ENCODE measurements at regions of chr12 and their contacts with region 1.

Region 1: GRCh38 chr12:47032644-47033043 is 46.8 kb upstream of the PCED1B start:
- DNase-seq: no peak
- H3K4me3 ChIP-seq: no peak overlapping the region
- H3K27ac ChIP-seq: no peak overlapping the region
- H3K4me1 ChIP-seq: peaks cover 0 to 7% (median 0%) of the 10 kb centered on the region in 4 donors
- H3K27me3 ChIP-seq: no peaks in the 10 kb centered on the region
- CTCF ChIP-seq: peak; percentile 45 to 54 (median 54)
- EP300 ChIP-seq: no peak
- POLR2A ChIP-seq: no peak

Region 2: DNA sequence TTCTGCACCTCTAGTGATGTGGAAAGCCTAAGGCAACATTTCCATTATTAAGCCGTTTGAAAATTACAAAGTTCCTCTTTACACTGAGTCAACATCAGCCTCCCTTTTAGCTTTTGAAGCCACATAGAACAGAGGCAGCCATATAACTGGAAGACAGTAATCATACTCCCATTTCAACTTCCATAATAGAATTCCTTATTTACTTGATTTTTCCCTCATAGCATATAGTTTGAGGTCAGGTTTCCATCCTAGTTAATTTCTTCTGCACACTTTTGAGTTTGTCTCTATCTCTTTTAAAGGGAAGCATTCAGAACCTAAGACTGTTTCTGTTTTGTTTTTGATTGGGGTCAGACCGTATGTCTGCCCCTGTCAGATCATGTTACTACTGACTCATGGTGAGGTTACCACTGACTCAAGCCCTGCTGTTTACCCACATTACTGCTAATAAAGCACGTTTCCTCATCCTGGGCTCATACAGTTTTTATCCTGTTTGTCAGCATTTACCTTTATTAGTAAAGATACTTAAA is 367.8 kb before region 1 on chr12:
- intact Hi-C with region 1: no loop called
- DNase-seq: no peak
- H3K4me3 ChIP-seq: no peak overlapping the region
- H3K27ac ChIP-seq: no peak overlapping the region
- H3K4me1 ChIP-seq: peaks cover 17 to 20% (median 18%) of the 10 kb centered on the region in 4 donors
- H3K27me3 ChIP-seq: no peaks in the 10 kb centered on the region
- CTCF ChIP-seq: no peak
- EP300 ChIP-seq: no peak
- POLR2A ChIP-seq: no peak

Region 3: DNA sequence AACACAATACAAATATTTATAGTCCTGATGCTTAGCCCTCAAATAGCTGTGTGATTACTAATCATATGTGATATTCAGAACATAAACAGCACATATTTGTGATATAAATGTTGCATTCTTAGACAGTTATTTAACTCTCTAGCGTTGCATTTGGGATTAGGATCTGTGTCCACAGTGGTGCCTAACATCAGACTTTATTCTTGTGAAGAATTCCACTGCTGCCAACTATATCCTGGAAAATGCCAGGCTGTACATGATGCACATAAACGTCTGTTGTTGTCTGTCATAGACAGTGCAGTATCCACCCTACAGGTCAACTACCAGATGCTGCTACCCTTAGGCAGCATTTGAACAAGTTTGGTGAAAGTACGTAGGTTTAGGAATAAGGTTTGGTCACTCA is 245.9 kb before region 1 on chr12:
- intact Hi-C with region 1: no loop called
- DNase-seq: no peak
- H3K4me3 ChIP-seq: no peak overlapping the region
- H3K27ac ChIP-seq: no peak overlapping the region
- H3K4me1 ChIP-seq: peaks cover 0 to 4% (median 0%) of the 10 kb centered on the region in 4 donors
- H3K27me3 ChIP-seq: no peaks in the 10 kb centered on the region
- CTCF ChIP-seq: no peak
- EP300 ChIP-seq: no peak
- POLR2A ChIP-seq: no peak

Region 4: GRCh38 chr12:46963977-46964971 is 68.4 kb before region 1 on chr12:
- intact Hi-C with region 1: no loop called
- DNase-seq: no peak
- H3K4me3 ChIP-seq: peak overlapping the region in 2 of 4 donors; percentile 12 to 19
- H3K27ac ChIP-seq: peak overlapping the region; percentile 50 to 66 (median 55)
- H3K4me1 ChIP-seq: peaks cover 22 to 32% (median 28%) of the 10 kb centered on the region in 4 donors
- H3K27me3 ChIP-seq: no peaks in the 10 kb centered on the region
- CTCF ChIP-seq: no peak
- EP300 ChIP-seq: no peak
- POLR2A ChIP-seq: no peak

Region 5: DNA sequence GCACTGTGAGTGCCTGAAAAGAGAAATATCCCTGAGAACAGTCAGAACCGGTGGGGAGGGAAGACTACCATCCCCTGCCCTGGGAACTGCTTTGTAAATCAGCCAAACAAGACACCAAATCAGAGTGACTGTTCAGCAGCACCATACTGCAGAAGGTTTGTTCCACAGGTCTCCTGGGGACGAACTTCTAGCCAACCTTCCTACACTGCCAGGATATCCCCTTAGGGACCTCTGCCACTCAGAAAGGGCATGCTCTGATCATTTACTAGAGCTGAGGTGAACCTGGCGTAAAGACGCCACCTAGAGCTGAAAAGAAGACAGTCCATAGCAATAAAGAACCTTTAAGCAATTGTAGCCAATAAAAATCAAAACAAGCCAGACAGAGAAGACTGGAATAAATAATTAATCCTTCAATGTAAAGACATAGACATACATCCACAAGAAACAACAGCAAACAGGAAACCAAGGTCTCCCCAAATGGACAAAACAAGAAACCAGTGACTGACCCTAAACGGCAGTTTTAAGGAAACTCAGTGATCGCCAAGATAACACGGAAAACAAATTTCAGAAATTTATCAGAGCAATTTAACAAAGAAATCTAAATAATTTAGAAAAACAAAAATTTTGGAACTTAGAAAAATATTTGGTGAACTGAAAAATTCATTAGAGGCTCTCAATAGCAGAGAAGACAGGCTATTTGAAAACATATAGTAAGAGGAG is 275.2 kb after region 1 on chr12:
- intact Hi-C with region 1: loop called (anchors 2 kb)
- DNase-seq: peak; percentile 64
- H3K4me3 ChIP-seq: no peak overlapping the region
- H3K27ac ChIP-seq: no peak overlapping the region
- H3K4me1 ChIP-seq: peaks cover 0 to 3% (median 0%) of the 10 kb centered on the region in 4 donors
- H3K27me3 ChIP-seq: no peaks in the 10 kb centered on the region
- CTCF ChIP-seq: peak; percentile 39 to 47 (median 44)
- EP300 ChIP-seq: no peak
- POLR2A ChIP-seq: no peak

Region 6: GRCh38 chr12:47408171-47408871 is 375.7 kb after region 1 on chr12:
- intact Hi-C with region 1: loop called (anchors 5 kb)
- DNase-seq: no peak
- H3K4me3 ChIP-seq: no peak overlapping the region
- H3K27ac ChIP-seq: no peak overlapping the region
- H3K4me1 ChIP-seq: peaks cover 0 to 4% (median 2%) of the 10 kb centered on the region in 4 donors
- H3K27me3 ChIP-seq: no peaks in the 10 kb centered on the region
- CTCF ChIP-seq: peak in 1 of 3 experiments; percentile 10
- EP300 ChIP-seq: no peak
- POLR2A ChIP-seq: no peak

Region 7: GRCh38 chr12:47433876-47434275 is 401.2 kb after region 1 on chr12:
- intact Hi-C with region 1: no loop called
- DNase-seq: no peak
- H3K4me3 ChIP-seq: no peak overlapping the region
- H3K27ac ChIP-seq: no peak overlapping the region
- H3K4me1 ChIP-seq: no peaks in the 10 kb centered on the region
- H3K27me3 ChIP-seq: no peaks in the 10 kb centered on the region
- CTCF ChIP-seq: no peak
- EP300 ChIP-seq: no peak
- POLR2A ChIP-seq: no peak